WTC11 (cell line): ENCODE measurements at regions of chr6 and their contacts with region 1.

Region 1: GRCh38 chr6:32244946-32245398 is 21.1 kb upstream of the NOTCH4 start:
- DNase-seq: peak; percentile 87
- ATAC-seq: peak; percentile 82
- H3K4me3 Mint-ChIP-seq: peak overlapping the region; percentile 51
- H3K27ac Mint-ChIP-seq: peak overlapping the region; percentile 82; the same call in 1 of the 2 replicates
- H3K4me1 Mint-ChIP-seq: peaks cover 6% of the 10 kb centered on the region
- H3K27me3 Mint-ChIP-seq: peaks cover 5% of the 10 kb centered on the region; the same call in 1 of the 2 replicates
- CTCF ChIP-seq: peak; percentile 88

Region 2: DNA sequence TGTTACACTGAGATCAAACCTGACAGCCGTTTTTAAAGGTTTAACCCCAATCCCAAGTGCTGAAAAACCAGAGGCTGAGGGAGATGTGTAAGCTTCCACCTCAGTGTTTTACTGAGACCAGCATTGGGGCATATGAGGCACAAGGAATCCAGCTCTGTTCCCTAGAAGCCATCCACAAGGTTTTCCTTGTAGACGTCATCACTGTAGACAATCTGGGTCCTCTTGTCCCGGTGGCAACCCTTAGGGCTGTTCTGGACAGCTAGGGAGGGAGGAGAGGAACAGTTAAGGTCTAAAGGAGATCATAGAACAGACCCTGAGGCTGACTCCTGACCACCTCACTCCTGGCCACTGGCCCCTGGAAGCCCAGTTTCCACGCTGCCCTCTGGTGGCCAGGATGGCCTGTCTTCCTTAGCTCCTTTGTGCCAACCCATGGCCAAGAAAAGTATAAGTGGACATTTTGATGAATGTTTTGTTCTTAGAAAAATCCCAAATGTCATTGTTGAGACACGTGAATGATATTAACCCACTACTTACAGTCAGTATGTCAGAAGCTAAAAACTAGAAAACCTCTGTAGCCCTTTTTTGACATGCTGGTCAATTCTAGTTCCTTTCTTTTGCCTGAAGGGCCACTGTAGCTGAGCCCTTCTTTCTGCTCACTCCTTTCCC is 292.7 kb before region 1 on chr6:
- CTCF ChIA-PET with region 1: no interaction called
- POLR2A ChIA-PET with region 1: no interaction called
- DNase-seq: peak; percentile 70
- ATAC-seq: peak; percentile 87
- H3K4me3 Mint-ChIP-seq: no peak overlapping the region
- H3K27ac Mint-ChIP-seq: no peak overlapping the region; the same call in 1 of the 2 replicates
- H3K4me1 Mint-ChIP-seq: no peaks in the 10 kb centered on the region
- H3K27me3 Mint-ChIP-seq: peaks cover 18% of the 10 kb centered on the region
- CTCF ChIP-seq: peak; percentile 31

Region 3: DNA sequence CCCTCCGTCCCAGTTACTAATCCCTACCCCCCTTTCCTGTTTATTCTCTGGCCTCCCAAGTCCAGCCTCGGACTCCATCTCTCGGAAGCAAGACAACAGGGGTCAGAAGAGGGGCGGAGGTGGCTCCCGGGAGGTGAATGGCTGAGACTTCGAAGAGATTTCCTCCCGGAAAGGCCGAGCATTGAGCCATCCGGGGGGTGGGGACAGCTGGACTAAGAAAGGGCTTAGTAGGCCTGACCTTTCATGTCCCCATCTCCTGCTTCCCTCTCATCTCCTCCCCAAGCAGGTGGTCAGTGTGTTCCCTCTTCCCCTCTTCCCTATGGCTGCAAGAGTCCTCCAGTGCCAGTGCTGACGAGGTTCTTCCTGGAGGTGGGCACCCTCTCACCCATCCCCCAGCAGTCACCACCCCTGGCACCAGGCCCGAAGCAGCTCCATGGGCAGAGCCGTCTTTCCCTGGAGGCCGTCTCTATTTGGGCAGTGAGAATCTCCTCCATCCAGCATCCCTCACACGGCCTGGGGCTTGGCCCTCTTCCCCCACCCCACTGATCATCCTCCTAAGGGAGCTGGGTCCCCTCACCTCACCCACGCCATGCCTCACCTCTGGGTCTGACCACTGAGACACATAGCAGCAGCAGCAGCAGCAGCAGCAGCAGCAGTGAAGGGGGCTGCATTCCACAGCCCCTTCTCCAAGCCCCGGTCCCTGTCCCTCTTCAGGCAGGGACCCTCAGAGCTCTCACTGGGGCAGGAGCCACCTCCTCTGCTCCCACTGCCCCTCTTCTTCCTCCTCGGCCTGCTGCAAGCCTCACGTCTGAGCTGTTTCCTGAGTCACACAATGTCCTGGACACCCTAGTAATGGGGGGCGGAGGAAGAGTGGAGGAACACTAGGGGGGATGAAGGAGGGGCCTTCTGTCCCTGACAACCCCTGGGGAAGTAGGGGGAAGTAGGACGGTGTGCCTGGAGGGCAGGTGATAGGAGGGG is 21.4 kb before region 1 on chr6 and contains the start of gene NOTCH4:
- CTCF ChIA-PET with region 1: no interaction called
- POLR2A ChIA-PET with region 1: no interaction called
- DNase-seq: no peak
- ATAC-seq: no peak
- H3K4me3 Mint-ChIP-seq: no peak within 1 kb of the TSS
- H3K27ac Mint-ChIP-seq: no peak within 1 kb of the TSS
- H3K4me1 Mint-ChIP-seq: peaks cover 15% of the 10 kb centered on the region
- H3K27me3 Mint-ChIP-seq: no peaks in the 10 kb centered on the region; the same call in 1 of the 2 replicates
- CTCF ChIP-seq: no peak
- total RNA-seq, gene NOTCH4: 2.4 to 2.6 TPM (median 2.6 TPM) in 3 replicates

Region 4: DNA sequence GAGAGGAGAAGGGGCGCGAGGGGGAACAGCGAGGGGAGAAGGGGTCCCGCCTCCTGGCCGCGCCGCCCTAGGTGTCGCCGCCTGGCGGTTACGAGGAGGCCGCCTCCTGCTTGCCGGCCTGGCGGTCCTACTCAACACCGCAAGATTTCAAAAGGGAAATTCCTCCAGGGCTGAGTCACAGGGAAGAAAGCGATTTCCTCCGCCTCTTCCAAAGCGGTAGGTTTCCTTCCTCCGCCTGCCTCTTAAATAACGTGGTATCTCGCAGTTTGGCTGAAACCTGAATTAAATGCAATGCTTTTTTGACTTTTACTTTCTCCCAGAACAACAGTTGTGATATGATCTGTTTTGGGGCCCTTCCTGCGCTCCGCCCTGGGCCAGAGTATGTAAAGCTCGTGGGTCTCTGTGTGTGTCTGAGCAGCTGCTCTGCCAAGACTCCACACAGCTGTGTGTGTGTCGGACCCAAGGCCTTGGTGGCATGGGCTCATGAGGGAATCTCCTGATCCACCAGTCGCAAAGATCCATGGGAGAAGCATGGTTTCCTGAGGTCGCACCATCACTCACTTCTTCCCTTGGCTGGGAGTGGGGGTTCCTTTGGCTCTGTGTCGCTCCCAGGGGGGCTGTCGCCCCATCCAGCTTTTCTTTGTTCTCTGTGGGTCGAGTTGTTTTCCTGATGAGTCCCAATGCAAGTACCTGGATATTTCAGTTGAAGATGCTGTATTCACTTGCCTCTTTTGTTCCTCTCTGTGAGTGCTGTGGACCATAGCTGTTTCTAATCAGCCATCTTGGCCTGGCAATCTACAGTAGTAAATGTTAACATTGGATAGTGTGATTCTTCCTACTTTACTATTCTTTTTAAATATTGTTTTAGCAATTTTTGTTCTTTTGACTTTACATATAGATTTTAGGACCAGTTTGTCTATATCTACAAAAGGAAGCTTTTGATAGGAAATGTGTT is 10.5 kb after region 1 on chr6:
- CTCF ChIA-PET with region 1: interaction called, 24 read pairs
- POLR2A ChIA-PET with region 1: no interaction called
- DNase-seq: peak; percentile 75
- ATAC-seq: peak; percentile 94
- H3K4me3 Mint-ChIP-seq: peak overlapping the region; percentile 66
- H3K27ac Mint-ChIP-seq: peak overlapping the region; percentile 97
- H3K4me1 Mint-ChIP-seq: peaks cover 18% of the 10 kb centered on the region
- H3K27me3 Mint-ChIP-seq: peaks cover 5% of the 10 kb centered on the region; the same call in 1 of the 2 replicates
- CTCF ChIP-seq: peak; percentile 56

Region 5: DNA sequence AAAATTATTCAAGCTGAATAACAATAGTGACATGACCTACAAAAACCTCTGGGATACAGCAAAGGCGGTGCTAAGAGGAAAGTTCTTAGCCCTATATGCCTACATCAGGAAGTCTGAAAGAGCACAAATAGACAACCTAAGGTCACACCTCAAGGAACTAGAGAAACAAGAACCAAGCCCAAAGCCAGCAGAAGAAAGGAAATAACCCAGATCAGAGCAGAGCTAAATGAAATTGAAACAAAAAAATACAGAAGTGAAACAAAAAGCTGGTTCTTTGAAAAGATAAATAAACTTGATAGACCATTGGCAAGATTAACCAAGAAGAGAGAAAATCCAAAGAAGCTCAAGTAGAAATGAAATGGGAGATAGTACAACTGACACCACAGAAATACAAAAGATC is 26.5 kb after region 1 on chr6:
- CTCF ChIA-PET with region 1: no interaction called
- POLR2A ChIA-PET with region 1: no interaction called
- DNase-seq: no peak
- ATAC-seq: no peak
- H3K4me3 Mint-ChIP-seq: no peak overlapping the region
- H3K27ac Mint-ChIP-seq: no peak overlapping the region
- H3K4me1 Mint-ChIP-seq: peaks cover 12% of the 10 kb centered on the region
- H3K27me3 Mint-ChIP-seq: no peaks in the 10 kb centered on the region; the same call in 1 of the 2 replicates
- CTCF ChIP-seq: no peak

Region 6: DNA sequence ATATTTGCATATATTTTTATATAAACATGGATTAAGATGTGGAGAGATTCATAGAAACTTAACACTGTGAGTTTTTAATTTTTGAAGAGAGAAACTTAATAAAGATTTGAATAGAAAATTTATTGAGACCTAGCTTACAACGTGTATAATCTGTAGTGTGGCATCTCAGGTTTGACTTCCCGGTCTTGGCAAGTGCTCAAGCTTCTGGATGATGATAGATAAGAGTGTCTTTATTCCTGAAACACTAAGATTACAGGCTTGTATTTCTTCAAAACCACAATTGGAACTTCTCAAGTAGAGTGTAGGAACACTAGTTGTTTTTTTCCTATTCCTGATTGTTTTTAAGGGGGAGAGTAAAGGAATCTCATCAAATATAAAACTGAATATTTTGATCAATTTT is 43.5 kb after region 1 on chr6:
- CTCF ChIA-PET with region 1: no interaction called
- POLR2A ChIA-PET with region 1: no interaction called
- DNase-seq: no peak
- ATAC-seq: no peak
- H3K4me3 Mint-ChIP-seq: no peak overlapping the region
- H3K27ac Mint-ChIP-seq: no peak overlapping the region
- H3K4me1 Mint-ChIP-seq: no peaks in the 10 kb centered on the region
- H3K27me3 Mint-ChIP-seq: peaks cover 5% of the 10 kb centered on the region
- CTCF ChIP-seq: no peak

Region 7: GRCh38 chr6:32402812-32403211 is 157.8 kb after region 1 on chr6:
- CTCF ChIA-PET with region 1: interaction called, 12 read pairs
- POLR2A ChIA-PET with region 1: no interaction called
- DNase-seq: no peak
- ATAC-seq: peak; percentile 70
- H3K4me3 Mint-ChIP-seq: no peak overlapping the region
- H3K27ac Mint-ChIP-seq: no peak overlapping the region
- H3K4me1 Mint-ChIP-seq: peaks cover 10% of the 10 kb centered on the region; the same call in 1 of the 2 replicates
- H3K27me3 Mint-ChIP-seq: peaks cover 7% of the 10 kb centered on the region; the same call in 1 of the 2 replicates
- CTCF ChIP-seq: no peak